ENCODE measurements at regions of chr3 and their contacts with region 1.

Region 1: GRCh38 chr3:3984053-3984452 is 184.8 kb downstream of the LRRN1 start:
- DNase-seq: no peak
- H3K4me3 ChIP-seq: no peak overlapping the region
- H3K4me3 Mint-ChIP-seq: no peak overlapping the region
- H3K27ac Mint-ChIP-seq: no peak overlapping the region
- H3K4me1 ChIP-seq: no peaks in the 10 kb centered on the region
- H3K4me1 Mint-ChIP-seq: no peaks in the 10 kb centered on the region
- H3K27me3 ChIP-seq: no peaks in the 10 kb centered on the region
- H3K27me3 Mint-ChIP-seq: peaks cover 6% of the 10 kb centered on the region
- CTCF ChIP-seq: no peak

Region 2: GRCh38 chr3:2343031-2343682 is 1640.9 kb before region 1 on chr3:
- CTCF ChIA-PET with region 1: no interaction called
- POLR2A ChIA-PET with region 1: no interaction called
- intact Hi-C with region 1: loop called (anchors 5 kb)
- DNase-seq: no peak
- H3K4me3 ChIP-seq: no peak overlapping the region
- H3K4me3 Mint-ChIP-seq: no peak overlapping the region
- H3K27ac Mint-ChIP-seq: no peak overlapping the region
- H3K4me1 ChIP-seq: no peaks in the 10 kb centered on the region
- H3K4me1 Mint-ChIP-seq: no peaks in the 10 kb centered on the region
- H3K27me3 ChIP-seq: no peaks in the 10 kb centered on the region
- H3K27me3 Mint-ChIP-seq: no peaks in the 10 kb centered on the region
- CTCF ChIP-seq: no peak